ENCODE measurements at regions of chrX and their contacts with region 1.

Region 1: DNA sequence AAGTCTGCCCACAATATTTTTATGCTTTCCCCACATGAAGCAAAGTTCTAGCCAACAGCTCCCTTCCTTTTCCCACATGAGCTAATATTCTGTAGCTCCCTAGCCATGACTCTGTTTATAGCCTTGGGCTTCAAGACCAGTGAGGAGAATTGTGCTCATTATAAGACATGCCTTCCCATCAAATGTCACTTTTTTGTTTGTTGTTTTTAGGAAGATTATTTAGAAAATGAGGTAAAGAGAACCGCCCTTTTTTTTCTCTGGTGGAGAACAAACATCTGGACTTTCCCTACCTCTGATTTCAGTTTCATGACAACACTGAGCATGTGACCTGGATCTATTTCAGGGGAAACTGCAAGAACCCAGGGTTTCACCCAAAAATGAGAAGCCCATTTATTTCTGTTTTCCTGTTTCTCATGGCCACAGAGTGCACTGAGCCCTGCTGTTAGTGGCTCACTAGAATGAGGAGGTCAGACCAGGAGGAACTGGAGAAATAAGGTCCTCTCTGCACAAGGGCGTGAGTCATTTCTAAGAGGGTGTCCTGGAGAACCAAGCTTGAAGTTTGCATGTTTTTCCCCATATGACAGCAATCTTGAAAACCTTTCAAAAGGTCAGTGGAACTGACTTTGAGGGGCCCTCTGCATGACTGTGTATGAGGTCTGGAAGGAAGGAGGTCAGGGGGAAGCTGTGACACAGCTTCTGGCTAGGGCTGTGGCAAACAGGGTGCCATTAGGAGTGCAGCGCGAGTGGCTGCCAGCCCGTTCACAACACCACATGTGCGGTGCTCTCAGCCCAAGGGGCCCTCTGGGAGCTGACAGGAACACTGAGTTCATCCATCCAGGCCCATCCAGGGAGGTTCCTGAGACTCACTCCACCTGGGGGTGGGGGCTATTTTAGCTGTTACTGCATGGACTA is 55.2 kb downstream of the CHST7 start:
- DNase-seq: peak; percentile 62
- ATAC-seq: peak; percentile 70
- H3K4me3 ChIP-seq: no peak overlapping the region
- H3K27ac ChIP-seq: peak overlapping the region; percentile 63; the same call in 1 of the 2 replicates
- H3K4me1 ChIP-seq: peaks cover 14% of the 10 kb centered on the region
- H3K27me3 ChIP-seq: no peaks in the 10 kb centered on the region
- CTCF ChIP-seq: no peak
- POLR2A ChIP-seq: no peak
- RAD21 ChIP-seq: no peak

Region 2: GRCh38 chrX:46398126-46398525 is 230.6 kb before region 1 on chrX:
- CTCF ChIA-PET with region 1: no interaction called
- POLR2A ChIA-PET with region 1: interaction called, 19 read pairs
- dilution Hi-C with region 1: no loop called
- in situ Hi-C with region 1: no loop called
- intact Hi-C with region 1: no loop called
- DNase-seq: no peak
- ATAC-seq: no peak
- H3K4me3 ChIP-seq: no peak overlapping the region
- H3K27ac ChIP-seq: no peak overlapping the region
- H3K4me1 ChIP-seq: no peaks in the 10 kb centered on the region
- H3K27me3 ChIP-seq: peaks cover 2% of the 10 kb centered on the region; the same call in 1 of the 2 replicates
- CTCF ChIP-seq: no peak
- POLR2A ChIP-seq: no peak
- RAD21 ChIP-seq: no peak

Region 3: DNA sequence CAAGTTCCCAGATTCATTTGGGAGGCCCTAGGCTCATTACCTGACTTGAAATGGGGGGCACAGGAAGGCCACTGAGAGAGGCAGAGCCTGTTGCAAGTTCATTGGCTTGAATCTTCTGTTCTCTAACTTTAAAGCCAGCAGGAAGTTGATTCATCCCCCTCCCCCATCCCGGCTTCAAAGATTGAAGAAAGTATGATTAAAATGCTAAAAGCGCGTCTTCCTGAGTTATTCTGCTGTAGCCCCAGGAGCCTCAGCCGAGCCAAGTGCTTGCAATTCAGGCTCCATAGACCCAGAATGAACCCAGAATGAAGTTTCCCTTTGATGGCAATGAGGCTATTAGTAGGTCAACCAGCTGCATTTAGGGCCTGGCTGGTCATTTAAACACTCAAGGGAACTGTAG is 40.5 kb before region 1 on chrX:
- CTCF ChIA-PET with region 1: no interaction called
- POLR2A ChIA-PET with region 1: no interaction called
- dilution Hi-C with region 1: no loop called
- in situ Hi-C with region 1: no loop called
- intact Hi-C with region 1: loop called (anchors 5 kb)
- DNase-seq: peak; percentile 68
- ATAC-seq: peak; percentile 70
- H3K4me3 ChIP-seq: no peak overlapping the region
- H3K27ac ChIP-seq: peak overlapping the region; percentile 88
- H3K4me1 ChIP-seq: peaks cover 12% of the 10 kb centered on the region
- H3K27me3 ChIP-seq: no peaks in the 10 kb centered on the region
- CTCF ChIP-seq: no peak
- POLR2A ChIP-seq: no peak
- RAD21 ChIP-seq: no peak